ENCODE measurements at regions of chr12 and their contacts with region 1.

Region 1: DNA sequence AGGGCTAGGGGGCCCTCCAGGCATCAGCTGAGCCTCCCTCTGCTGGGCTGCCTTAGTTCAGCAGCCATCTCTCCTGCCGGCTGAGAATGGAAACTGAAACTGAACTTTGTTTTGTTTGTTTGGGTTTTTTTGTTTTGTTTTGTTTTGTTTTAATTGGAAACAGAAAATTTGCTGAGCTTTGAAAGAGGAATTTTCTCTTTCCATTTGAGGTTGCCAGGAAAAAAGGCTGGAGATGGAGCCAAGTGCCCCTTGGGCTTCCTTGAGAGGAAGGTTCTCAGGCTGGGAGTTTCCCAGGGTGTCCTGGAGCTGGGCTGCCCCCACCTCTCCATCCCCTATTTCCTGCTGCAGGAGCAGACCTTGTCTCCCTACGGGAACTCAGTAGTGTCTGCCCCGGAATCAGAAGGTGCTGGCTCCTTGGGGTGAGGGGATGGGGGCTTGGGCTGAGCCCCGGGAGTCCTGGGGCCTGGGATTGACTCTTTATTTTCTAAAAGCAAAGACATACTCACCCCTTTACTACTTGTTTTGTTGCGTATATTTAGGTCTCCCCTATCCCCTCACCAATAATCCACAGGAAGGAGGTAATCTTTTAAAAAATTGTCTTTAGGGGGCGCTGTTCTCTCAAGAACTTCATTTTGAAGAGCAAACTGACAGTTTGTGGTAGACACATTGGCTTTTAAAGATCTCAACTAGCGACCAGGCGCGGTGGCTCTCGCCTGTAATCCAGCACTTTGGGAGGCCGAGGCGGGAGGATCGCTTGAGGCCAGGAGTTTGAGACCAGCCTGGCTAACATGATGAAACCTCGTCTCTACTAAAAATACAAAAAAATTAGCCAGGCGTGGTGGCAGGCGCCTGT is 21.3 kb upstream of the OASL start:
- DNase-seq: peak in 3 of 10 donors; percentile 29 to 69 (median 68)

Region 2: GRCh38 chr12:121095544-121096198 is 35.3 kb after region 1 on chr12:
- intact Hi-C with region 1: loop called (anchors 5 kb)
- DNase-seq: peak; percentile 59 to 96 (median 76)

Region 3: DNA sequence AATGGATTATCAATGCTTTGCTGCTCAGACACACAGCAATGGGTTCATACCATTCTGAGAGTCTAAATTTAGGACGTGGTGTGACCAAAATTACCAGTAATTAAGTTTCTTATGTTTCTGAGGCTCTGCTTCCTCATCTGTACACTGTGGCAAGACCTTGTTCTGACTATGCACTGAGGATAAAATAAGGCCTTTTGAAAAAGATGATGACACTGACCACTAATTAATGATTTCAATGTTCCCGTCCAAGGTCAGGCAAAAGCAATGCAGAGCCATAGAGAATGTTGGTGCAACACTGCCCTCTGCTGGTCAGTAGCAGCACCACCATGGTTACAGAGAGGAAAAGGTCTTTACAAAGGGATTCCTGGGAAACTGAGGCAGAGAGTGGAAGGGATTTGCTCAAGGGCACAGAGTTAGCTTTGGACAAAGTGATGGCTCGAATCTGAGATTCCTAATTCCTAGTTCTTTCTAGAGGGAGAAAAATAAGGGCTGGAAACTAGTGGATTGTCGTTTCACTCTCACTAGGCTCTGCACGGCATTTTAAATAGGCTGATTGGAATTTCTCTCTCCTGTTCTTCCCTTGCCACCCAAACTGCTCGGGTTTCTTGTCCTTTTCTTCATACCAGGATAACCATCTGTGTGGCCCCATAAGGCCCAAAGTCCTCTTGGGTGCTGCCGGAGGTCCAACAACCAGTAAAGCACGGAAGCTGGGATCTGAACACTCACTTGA is 50.0 kb after region 1 on chr12:
- intact Hi-C with region 1: loop called (anchors 5 kb)
- DNase-seq: peak in 9 of 10 donors; percentile 42 to 95 (median 79)

Region 4: DNA sequence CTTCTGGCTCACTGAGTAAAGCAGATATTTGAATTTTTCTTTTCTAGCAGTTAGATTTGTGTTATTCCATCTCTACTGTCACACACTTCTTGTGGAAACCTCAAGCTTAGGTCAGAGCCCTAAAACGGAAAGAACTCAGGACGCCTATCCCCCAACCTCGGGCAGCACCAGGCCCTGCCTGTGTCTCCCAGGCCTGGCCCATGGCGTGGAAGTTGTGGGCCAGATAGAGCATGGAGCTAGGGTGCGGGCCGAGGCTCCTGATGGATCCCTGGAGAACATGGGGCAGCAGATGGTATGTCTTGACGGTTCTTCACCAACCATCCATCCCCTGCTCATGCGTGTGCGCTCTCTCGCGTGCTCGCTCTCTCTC is 170.1 kb after region 1 on chr12:
- intact Hi-C with region 1: loop called (anchors 2 kb)
- DNase-seq: peak in 3 of 10 donors; percentile 24 to 59 (median 38)

Measured in posterior cingulate gyrus (tissue), 11 donors.